ENCODE measurements at regions of chr17 and their contacts with region 1.

Region 1: GRCh38 chr17:39653662-39654331 is 11.4 kb upstream of the TCAP start:
- DNase-seq: no peak
- H3K4me3 ChIP-seq: no peak overlapping the region
- CTCF ChIP-seq: peak; percentile 82

Region 2: GRCh38 chr17:39591958-39592954 is 61.5 kb before region 1 on chr17:
- CTCF ChIA-PET with region 1: no interaction called
- POLR2A ChIA-PET with region 1: no interaction called
- DNase-seq: no peak
- H3K4me3 ChIP-seq: no peak overlapping the region
- CTCF ChIP-seq: no peak

Region 3: GRCh38 chr17:39605492-39606433 is 48.0 kb before region 1 on chr17:
- CTCF ChIA-PET with region 1: no interaction called
- POLR2A ChIA-PET with region 1: no interaction called
- DNase-seq: no peak
- H3K4me3 ChIP-seq: no peak overlapping the region
- CTCF ChIP-seq: no peak

Region 4: GRCh38 chr17:39636927-39637736 is 16.7 kb before region 1 on chr17 and contains the start of gene STARD3:
- CTCF ChIA-PET with region 1: interaction called, 822 read pairs
- POLR2A ChIA-PET with region 1: no interaction called
- DNase-seq: peak; percentile 33
- H3K4me3 ChIP-seq: peak within 1 kb of the TSS; percentile 93
- CTCF ChIP-seq: peak; percentile 29

Region 5: DNA sequence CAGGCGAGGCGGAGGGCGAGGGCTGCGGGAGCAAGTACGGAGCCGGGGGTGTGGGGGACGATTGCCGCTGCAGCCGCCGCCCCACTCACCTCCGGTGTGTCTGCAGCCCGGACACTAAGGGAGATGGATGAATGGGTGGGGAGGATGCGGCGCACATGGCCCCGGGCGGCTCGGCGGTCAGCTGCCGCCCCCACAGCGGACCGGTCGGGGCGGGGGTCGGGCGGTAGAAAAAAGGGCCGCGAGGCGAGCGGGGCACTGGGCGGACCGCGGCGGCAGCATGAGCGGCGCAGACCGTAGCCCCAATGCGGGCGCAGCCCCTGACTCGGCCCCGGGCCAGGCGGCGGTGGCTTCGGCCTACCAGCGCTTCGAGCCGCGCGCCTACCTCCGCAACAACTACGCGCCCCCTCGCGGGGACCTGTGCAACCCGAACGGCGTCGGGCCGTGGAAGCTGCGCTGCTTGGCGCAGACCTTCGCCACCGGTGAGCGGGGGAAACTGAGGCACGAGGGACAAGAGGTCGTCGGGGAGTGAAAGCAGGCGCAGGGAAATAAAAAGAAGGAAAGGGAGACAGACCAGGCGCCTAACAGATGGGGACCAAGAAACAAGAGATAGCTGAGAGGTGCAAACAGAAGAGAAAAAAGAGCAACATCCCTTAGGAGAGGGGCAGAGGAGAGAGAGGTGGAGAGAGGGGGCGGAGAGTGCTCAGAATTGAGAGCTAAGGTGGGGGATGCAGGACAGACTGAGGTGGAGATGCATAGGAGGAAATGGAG is 14.6 kb after region 1 on chr17 and contains the start of gene PNMT:
- CTCF ChIA-PET with region 1: interaction called, 111 read pairs
- POLR2A ChIA-PET with region 1: no interaction called
- DNase-seq: no peak
- H3K4me3 ChIP-seq: peak within 1 kb of the TSS; percentile 29
- CTCF ChIP-seq: peak; percentile 87

Region 6: DNA sequence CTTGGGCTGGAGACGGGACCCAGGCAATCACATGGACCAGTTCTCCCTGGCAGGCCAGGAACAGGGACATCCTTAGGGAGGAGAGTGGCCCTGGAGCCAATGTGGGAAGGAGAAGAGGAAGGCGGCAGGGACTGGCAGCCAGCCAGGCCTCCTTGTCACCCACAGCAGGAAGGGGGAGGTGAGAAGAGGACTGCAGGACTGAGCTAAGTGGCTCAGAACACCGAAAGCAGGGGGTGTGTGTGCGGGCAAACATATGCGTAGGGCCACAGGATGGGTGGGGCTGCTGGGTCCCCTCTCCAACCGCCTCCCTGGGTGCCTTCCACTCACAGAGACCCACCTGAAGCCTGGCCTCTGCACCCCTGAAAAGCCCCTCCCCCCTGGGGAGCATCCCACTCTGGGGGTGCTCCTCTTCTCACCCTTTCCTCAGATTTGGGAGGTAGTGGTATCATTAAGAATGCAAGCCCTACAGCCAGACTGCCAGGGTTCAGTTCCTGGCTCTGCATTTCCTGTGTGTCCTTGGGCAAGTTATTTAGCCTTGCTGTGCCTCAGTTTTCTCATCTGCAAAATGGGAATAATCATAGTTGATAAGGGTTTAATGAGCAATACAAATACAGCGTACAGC is 22.5 kb after region 1 on chr17:
- CTCF ChIA-PET with region 1: interaction called, 111 read pairs
- POLR2A ChIA-PET with region 1: no interaction called
- DNase-seq: no peak
- H3K4me3 ChIP-seq: no peak overlapping the region
- CTCF ChIP-seq: no peak

Region 7: GRCh38 chr17:39699818-39700147 is 46.0 kb after region 1 on chr17 and contains the start of gene ERBB2:
- CTCF ChIA-PET with region 1: interaction called, 13 read pairs
- POLR2A ChIA-PET with region 1: no interaction called
- DNase-seq: peak; percentile 31
- H3K4me3 ChIP-seq: peak within 1 kb of the TSS; percentile 78
- CTCF ChIP-seq: no peak